ENCODE measurements at regions of chr15 and their contacts with region 1.

Region 1: DNA sequence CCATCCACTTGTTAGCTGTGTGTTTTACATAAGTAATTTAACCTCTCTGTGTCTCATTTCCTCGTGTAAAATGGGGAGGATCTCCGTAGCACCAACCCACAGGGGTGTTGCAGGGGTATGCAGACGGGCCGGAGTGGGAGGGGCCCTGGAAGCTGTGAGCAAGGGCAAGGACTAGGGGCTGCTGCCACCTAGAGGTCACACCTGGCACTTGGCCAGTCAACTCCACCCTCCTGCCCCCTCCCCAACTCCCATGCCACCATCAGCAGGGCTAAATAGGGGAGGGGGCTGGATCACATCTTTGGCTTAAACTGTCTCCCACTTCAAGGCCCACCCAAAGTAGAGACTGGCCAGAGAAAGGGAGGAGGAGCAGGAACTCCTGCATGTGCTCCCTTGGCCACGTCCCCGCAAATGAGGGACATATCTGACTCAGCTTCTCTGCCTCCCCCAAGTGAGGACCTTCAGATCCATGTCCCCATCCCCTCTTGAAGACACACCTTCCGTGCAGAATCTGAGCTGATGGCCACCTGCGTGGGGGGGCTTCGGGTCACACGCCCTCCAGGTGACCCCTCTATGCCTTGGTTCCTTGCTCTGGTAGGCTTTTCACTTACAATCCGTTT is 2.6 kb downstream of the CCDC9B start:
- DNase-seq: peak; percentile 78 to 81 (median 80)
- H3K4me3 ChIP-seq: peak overlapping the region in 1 of 3 experiments; percentile 32
- H3K4me3 Mint-ChIP-seq: peak overlapping the region in 1 of 2 donors; percentile 76
- H3K27ac ChIP-seq: no peak overlapping the region
- H3K27ac Mint-ChIP-seq: peak overlapping the region in 2 of 7 donors; percentile 25 to 71
- H3K4me1 ChIP-seq: peaks cover 81 to 89% of the 10 kb centered on the region in 2 donors
- H3K4me1 Mint-ChIP-seq: peaks cover 72% of the 10 kb centered on the region
- H3K27me3 ChIP-seq: no peaks in the 10 kb centered on the region
- H3K27me3 Mint-ChIP-seq: peaks cover 0 to 5% (median 2%) of the 10 kb centered on the region in 3 donors
- CTCF ChIP-seq: peak; percentile 95

Region 2: DNA sequence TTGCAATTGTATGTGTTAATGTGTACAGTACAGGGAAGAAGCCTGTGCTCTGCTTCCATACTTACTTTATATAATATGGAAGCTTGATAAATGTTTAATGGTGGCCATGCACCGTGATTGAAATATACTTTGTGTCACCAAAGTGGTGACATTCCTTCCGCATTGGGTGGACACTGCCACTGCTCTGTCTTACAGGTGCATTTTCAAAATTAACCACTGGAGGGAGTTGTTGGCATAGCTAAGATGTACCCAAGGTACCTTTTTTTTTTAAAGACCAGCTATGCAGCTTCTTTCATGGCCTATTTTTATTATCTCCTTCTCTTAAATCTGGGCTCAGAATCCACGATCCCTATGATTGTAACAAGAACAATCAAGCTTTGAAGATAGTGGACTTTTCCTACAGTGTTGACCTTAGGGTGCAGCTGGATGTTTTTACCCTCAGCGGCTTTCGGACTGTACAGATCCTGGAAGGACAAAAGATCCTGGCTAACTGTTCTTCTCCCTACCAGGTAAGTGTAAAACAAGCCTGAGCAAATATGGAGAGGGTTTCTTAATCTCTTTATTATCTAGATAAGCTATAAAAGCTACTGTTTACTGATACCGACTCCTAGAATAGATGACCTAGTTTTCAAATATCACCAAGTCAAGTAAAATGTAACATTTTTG is 120.9 kb before region 1 on chr15:
- intact Hi-C with region 1: no loop called
- DNase-seq: peak; percentile 69 to 79 (median 75)
- H3K4me3 ChIP-seq: no peak overlapping the region
- H3K4me3 Mint-ChIP-seq: no peak overlapping the region
- H3K27ac ChIP-seq: no peak overlapping the region
- H3K27ac Mint-ChIP-seq: no peak overlapping the region
- H3K4me1 ChIP-seq: no peaks in the 10 kb centered on the region
- H3K4me1 Mint-ChIP-seq: no peaks in the 10 kb centered on the region
- H3K27me3 ChIP-seq: no peaks in the 10 kb centered on the region
- H3K27me3 Mint-ChIP-seq: no peaks in the 10 kb centered on the region
- CTCF ChIP-seq: peak; percentile 87

Region 3: GRCh38 chr15:40323953-40324937 is 13.9 kb before region 1 on chr15:
- intact Hi-C with region 1: loop called in 1 of 2 experiments (anchors 1 kb)
- DNase-seq: peak in 1 of 3 donors; percentile 19
- H3K4me3 ChIP-seq: peak overlapping the region; percentile 63 to 82 (median 68)
- H3K4me3 Mint-ChIP-seq: peak overlapping the region; percentile 92 to 93
- H3K27ac ChIP-seq: peak overlapping the region in 1 of 2 donors; percentile 72
- H3K27ac Mint-ChIP-seq: peak overlapping the region in 4 of 7 donors; percentile 68 to 85 (median 74)
- H3K4me1 ChIP-seq: peaks cover 30 to 52% of the 10 kb centered on the region in 2 donors
- H3K4me1 Mint-ChIP-seq: peaks cover 55% of the 10 kb centered on the region
- H3K27me3 ChIP-seq: no peaks in the 10 kb centered on the region
- H3K27me3 Mint-ChIP-seq: peaks cover 0 to 5% (median 2%) of the 10 kb centered on the region in 3 donors
- CTCF ChIP-seq: no peak